ENCODE measurements at regions of chr18 and their contacts with region 1.

Region 1: DNA sequence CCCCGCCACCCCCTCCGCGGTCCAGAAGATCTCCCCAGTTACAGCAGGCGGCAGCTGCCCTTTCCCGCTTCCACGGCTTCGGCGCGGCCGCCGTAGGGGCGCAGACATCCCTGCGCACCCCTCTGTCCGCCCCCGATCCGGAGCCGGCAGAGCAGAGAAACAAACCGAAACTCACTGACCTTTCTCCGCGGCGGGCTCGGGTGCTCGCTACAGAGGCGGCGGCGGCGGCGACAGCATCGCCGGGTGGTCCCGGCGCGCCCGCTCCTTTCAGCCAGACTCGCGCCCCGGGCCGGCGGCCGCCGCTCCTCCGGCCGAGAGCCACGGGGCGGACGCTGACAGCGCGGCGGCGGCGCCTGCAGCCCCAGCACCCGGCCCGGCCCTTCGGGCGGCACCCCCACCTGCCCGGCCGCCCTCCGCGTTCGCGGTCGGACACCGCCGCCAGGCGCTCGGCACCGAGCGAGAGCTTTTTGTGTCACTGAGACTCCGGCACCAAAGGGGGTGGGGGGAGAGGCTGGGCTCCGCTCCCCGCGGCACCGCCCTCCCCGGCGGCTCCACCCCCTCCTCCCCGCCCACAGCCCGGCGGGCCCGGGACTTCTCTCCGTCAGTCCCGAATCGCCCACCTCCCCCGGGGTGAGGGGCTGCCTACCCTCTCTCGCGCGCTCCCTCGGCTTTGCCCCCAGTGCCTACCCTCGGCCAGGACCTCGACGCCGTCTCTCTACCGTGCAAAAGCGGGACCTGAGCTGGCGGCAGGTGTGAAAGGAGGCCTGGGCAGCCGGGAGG is 1.4 kb upstream of the RNF152 start:
- DNase-seq: peak; percentile 81 to 93 (median 86)
- ATAC-seq: peak; percentile 88 to 96 (median 95)
- H3K4me3 ChIP-seq: peak overlapping the region; percentile 65 to 87 (median 80)
- H3K27ac ChIP-seq: peak overlapping the region; percentile 56 to 79 (median 78)
- H3K4me1 ChIP-seq: no peaks in the 10 kb centered on the region
- H3K27me3 ChIP-seq: no peaks in the 10 kb centered on the region
- CTCF ChIP-seq: no peak

Region 2: GRCh38 chr18:61581578-61582201 is 312.5 kb before region 1 on chr18:
- intact Hi-C with region 1: loop called in 1 of 3 experiments (anchors 10 kb)
- DNase-seq: peak; percentile 60 to 94 (median 78)
- ATAC-seq: peak; percentile 96 to 99 (median 98)
- H3K4me3 ChIP-seq: peak overlapping the region in 2 of 4 donors; percentile 21 to 40
- H3K27ac ChIP-seq: no peak overlapping the region
- H3K4me1 ChIP-seq: peaks cover 3% of the 10 kb centered on the region in 3 donors
- H3K27me3 ChIP-seq: no peaks in the 10 kb centered on the region
- CTCF ChIP-seq: peak; percentile 97 to 98 (median 98)

Region 3: DNA sequence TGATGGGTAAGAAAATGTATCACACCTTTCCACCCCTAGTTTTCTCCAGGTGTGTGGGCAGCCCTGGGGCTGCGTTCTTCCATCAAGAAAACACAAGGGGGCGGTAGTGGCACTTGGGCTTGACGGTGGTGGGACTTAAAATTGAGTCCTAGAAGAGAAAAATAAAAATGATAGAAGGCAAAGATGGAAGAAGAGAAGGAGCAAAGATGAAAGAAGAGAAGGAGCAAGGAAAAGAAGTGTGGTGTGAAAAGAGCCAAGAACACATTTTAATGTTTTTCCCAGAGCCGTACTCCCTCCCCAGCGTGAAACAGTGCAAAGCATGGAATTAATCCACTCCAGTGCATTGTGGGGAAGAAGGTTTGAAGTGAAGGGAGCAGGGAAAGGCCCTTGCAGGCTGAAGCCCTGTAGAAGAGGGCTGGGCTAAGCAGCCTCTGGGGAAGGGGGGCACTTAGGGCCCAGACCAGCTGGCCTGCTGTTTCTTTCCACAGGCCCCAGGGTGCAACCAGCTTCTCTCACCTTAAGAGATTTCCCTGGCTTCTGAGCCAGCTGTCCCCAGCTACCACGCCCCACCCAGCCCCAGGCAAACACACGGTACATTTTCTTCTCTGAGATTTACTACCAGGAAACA is 258.1 kb before region 1 on chr18:
- intact Hi-C with region 1: loop called in 2 of 3 experiments (anchors 5 to 10 kb)
- DNase-seq: peak; percentile 47 to 75 (median 60)
- ATAC-seq: peak; percentile 86 to 89 (median 88)
- H3K4me3 ChIP-seq: no peak overlapping the region
- H3K27ac ChIP-seq: peak overlapping the region; percentile 34 to 68 (median 56)
- H3K4me1 ChIP-seq: peaks cover 16 to 18% (median 17%) of the 10 kb centered on the region in 3 donors
- H3K27me3 ChIP-seq: no peaks in the 10 kb centered on the region
- CTCF ChIP-seq: peak; percentile 78 to 86 (median 82)

Region 4: GRCh38 chr18:61643884-61644647 is 250.1 kb before region 1 on chr18:
- intact Hi-C with region 1: loop called in 2 of 3 experiments (anchors 5 to 10 kb)
- DNase-seq: no peak
- ATAC-seq: no peak
- H3K4me3 ChIP-seq: no peak overlapping the region
- H3K27ac ChIP-seq: no peak overlapping the region
- H3K4me1 ChIP-seq: no peaks in the 10 kb centered on the region
- H3K27me3 ChIP-seq: no peaks in the 10 kb centered on the region
- CTCF ChIP-seq: no peak

Region 5: DNA sequence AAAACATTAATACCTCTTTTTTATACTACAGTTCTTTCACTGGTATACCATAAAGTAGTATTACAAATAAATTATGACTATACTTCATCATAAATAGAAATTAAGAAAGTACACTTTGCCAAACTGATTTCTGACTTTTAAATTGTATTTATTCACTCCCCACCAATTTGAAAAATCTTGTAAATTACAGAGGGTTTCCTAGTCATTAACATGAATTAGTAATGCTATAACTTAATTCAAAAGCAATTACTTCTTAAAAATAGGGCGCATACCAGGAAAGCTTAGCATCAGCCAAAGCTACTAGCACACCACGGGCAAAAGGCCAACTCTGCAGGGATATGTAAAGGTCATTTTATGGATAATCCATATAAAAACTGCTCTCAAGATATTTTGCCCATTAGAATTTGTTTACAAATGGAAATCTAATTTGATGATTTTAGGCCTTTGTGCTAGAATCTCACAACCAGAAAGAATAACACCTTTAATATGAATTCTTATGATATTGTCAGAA is 150.4 kb after region 1 on chr18:
- intact Hi-C with region 1: no loop called
- DNase-seq: no peak
- ATAC-seq: no peak
- H3K4me3 ChIP-seq: no peak overlapping the region
- H3K27ac ChIP-seq: no peak overlapping the region
- H3K4me1 ChIP-seq: no peaks in the 10 kb centered on the region
- H3K27me3 ChIP-seq: no peaks in the 10 kb centered on the region
- CTCF ChIP-seq: no peak

Region 6: GRCh38 chr18:63320046-63320689 is 1426.0 kb after region 1 on chr18:
- intact Hi-C with region 1: no loop called
- DNase-seq: peak; percentile 67 to 83 (median 72)
- ATAC-seq: peak; percentile 66 to 75 (median 72)
- H3K4me3 ChIP-seq: peak overlapping the region in 3 of 4 donors; percentile 43 to 67 (median 50)
- H3K27ac ChIP-seq: peak overlapping the region in 3 of 4 donors; percentile 67 to 82 (median 70)
- H3K4me1 ChIP-seq: peaks cover 0 to 7% (median 0%) of the 10 kb centered on the region in 3 donors
- H3K27me3 ChIP-seq: no peaks in the 10 kb centered on the region
- CTCF ChIP-seq: no peak

Measured in pancreas (tissue), 10 donors.